ENCODE measurements at regions of chr2 and their contacts with region 1.

Region 1: GRCh38 chr2:52518678-52519077 is 1248.9 kb upstream of the CHAC2 start:
- DNase-seq: no peak
- ATAC-seq: no peak
- H3K4me3 ChIP-seq: no peak overlapping the region
- H3K27ac ChIP-seq: no peak overlapping the region
- H3K4me1 ChIP-seq: no peaks in the 10 kb centered on the region
- H3K27me3 ChIP-seq: no peaks in the 10 kb centered on the region
- CTCF ChIP-seq: no peak
- POLR2A ChIP-seq: no peak
- RAD21 ChIP-seq: no peak

Region 2: DNA sequence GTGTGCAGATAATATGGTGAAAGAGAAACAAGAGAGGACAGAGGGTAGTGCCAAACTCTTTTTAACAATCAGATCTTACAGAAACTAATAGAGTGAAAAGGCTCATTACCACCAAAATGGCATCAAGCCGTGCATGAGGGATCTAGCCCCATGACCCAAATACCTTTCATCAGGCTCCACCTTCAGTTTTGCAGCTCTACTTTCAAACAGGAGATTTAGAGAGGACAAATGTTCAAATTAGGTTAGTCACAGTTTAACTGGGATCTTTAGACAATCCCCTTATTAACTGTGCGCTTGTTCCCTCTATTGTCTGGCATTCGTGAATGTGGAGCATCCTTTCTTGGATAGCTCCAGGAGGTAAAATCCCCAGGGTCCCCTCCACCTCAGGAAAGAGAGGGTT is 39.6 kb after region 1 on chr2:
- CTCF ChIA-PET with region 1: interaction called, 6 read pairs
- POLR2A ChIA-PET with region 1: no interaction called
- RAD21 ChIA-PET with region 1: no interaction called
- intact Hi-C with region 1: loop called (anchors 1 kb)
- DNase-seq: no peak
- ATAC-seq: no peak
- H3K4me3 ChIP-seq: no peak overlapping the region
- H3K27ac ChIP-seq: no peak overlapping the region
- H3K4me1 ChIP-seq: no peaks in the 10 kb centered on the region
- H3K27me3 ChIP-seq: no peaks in the 10 kb centered on the region
- CTCF ChIP-seq: no peak
- POLR2A ChIP-seq: no peak
- RAD21 ChIP-seq: no peak

Measured in HCT116 (cell line).